Activated CD8-positive, alpha-beta T cell treated with anti-CD3 and anti-CD28 coated beads for 36 hours (primary cell): ENCODE measurements at regions of chr17 and their contacts with region 1.

Region 1: GRCh38 chr17:77088455-77089123 is 52.2 kb upstream of the SEC14L1 start:
- DNase-seq: peak; percentile 93
- ATAC-seq: peak; percentile 88
- H3K4me3 Mint-ChIP-seq: peak overlapping the region; percentile 90
- H3K27ac Mint-ChIP-seq: peak overlapping the region; percentile 92
- H3K4me1 Mint-ChIP-seq: peaks cover 49% of the 10 kb centered on the region
- H3K27me3 Mint-ChIP-seq: no peaks in the 10 kb centered on the region
- CTCF ChIP-seq: peak; percentile 71

Region 2: GRCh38 chr17:76997981-76998531 is 90.5 kb before region 1 on chr17:
- CTCF ChIA-PET with region 1: no interaction called
- POLR2A ChIA-PET with region 1: no interaction called
- intact Hi-C with region 1: no loop called
- DNase-seq: peak; percentile 87
- ATAC-seq: peak; percentile 94
- H3K4me3 Mint-ChIP-seq: peak overlapping the region; percentile 29
- H3K27ac Mint-ChIP-seq: peak overlapping the region; percentile 89
- H3K4me1 Mint-ChIP-seq: peaks cover 44% of the 10 kb centered on the region
- H3K27me3 Mint-ChIP-seq: no peaks in the 10 kb centered on the region
- CTCF ChIP-seq: no peak

Region 3: DNA sequence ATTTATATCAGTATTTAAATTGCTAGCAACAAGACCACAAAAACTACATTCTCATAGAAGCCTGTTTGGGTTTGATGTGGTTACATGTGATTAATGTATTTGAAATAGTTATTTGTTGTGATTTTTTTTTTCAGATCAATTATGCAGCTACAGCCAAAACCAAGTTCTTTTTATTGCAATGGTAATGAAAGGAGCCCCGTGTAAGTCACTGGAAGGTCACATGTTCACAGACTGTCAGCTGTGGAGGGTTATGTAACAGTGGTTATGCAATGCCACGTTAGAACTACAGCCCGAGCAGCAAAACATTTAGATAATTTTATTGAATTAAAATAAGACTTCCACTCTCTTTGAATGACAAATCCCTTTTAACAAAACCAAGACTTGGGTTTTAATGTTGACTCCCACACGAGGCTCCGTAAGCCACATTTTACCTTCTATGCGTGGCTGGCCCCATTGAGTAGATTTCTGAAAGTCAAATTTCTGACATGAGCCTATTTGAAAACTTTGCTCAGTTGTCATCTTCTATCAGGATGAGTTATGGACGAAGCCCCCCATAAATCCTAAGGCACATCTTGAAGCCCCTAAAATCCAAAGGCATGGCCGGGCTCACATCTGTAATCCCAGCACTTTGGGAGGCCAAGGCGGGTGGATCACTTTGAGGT is 10.4 kb after region 1 on chr17:
- CTCF ChIA-PET with region 1: interaction called, 5 read pairs
- POLR2A ChIA-PET with region 1: interaction called, 10 read pairs
- intact Hi-C with region 1: no loop called
- DNase-seq: peak; percentile 15
- ATAC-seq: peak; percentile 28
- H3K4me3 Mint-ChIP-seq: no peak overlapping the region
- H3K27ac Mint-ChIP-seq: peak overlapping the region; percentile 86
- H3K4me1 Mint-ChIP-seq: peaks cover 41% of the 10 kb centered on the region
- H3K27me3 Mint-ChIP-seq: no peaks in the 10 kb centered on the region
- CTCF ChIP-seq: no peak

Region 4: GRCh38 chr17:77127735-77128361 is 39.3 kb after region 1 on chr17:
- CTCF ChIA-PET with region 1: interaction called, 10 read pairs
- POLR2A ChIA-PET with region 1: interaction called, 9 read pairs
- intact Hi-C with region 1: no loop called
- DNase-seq: peak; percentile 91
- ATAC-seq: peak; percentile 94
- H3K4me3 Mint-ChIP-seq: peak overlapping the region; percentile 64
- H3K27ac Mint-ChIP-seq: peak overlapping the region; percentile 92
- H3K4me1 Mint-ChIP-seq: peaks cover 41% of the 10 kb centered on the region
- H3K27me3 Mint-ChIP-seq: no peaks in the 10 kb centered on the region
- CTCF ChIP-seq: no peak

Region 5: DNA sequence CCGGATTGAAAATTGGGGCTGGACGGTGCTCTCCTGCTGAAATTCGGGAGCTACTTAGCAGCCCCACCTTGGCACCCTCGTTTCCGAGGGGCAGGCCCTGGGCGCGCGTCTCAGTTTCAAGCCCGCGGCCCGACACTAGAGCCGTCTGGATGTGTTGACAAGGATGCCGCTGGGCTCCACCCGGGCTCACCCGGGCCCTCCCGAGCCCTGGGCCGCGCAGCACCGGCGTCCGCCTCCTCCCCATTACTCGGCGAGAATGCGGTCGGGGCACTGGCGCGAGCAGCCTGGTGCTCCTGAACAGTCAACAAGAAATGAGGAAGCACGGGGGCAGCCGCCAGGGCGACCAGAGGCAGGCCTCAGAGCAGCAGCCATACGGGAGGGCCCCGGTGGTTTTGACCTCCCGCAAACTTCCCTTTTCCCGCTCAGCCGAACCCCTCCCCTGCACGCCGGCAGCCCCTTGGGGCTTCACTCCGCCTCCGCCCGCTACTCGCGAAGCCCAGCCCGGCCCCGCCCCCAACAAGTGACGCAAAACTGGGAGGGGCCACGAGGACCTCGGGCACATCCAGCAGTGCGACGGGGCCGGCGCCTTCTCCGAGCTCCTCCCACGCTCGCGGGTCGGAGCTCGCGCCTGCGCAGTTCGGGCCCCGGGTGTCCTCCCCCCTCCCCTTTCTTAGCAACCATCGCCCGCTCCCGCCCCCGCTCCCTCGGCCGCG is 51.7 kb after region 1 on chr17:
- CTCF ChIA-PET with region 1: interaction called, 13 read pairs
- POLR2A ChIA-PET with region 1: interaction called, 15 read pairs
- intact Hi-C with region 1: no loop called
- DNase-seq: peak; percentile 99
- ATAC-seq: peak; percentile 87
- H3K4me3 Mint-ChIP-seq: peak overlapping the region; percentile 72
- H3K27ac Mint-ChIP-seq: peak overlapping the region; percentile 97
- H3K4me1 Mint-ChIP-seq: peaks cover 48% of the 10 kb centered on the region
- H3K27me3 Mint-ChIP-seq: no peaks in the 10 kb centered on the region
- CTCF ChIP-seq: no peak

Region 6: GRCh38 chr17:77247048-77247541 is 158.5 kb after region 1 on chr17:
- CTCF ChIA-PET with region 1: interaction called, 29 read pairs
- POLR2A ChIA-PET with region 1: interaction called, 7 read pairs
- intact Hi-C with region 1: loop called (anchors 1 kb)
- DNase-seq: peak; percentile 91
- ATAC-seq: peak; percentile 96
- H3K4me3 Mint-ChIP-seq: peak overlapping the region; percentile 48
- H3K27ac Mint-ChIP-seq: no peak overlapping the region
- H3K4me1 Mint-ChIP-seq: peaks cover 9% of the 10 kb centered on the region
- H3K27me3 Mint-ChIP-seq: peaks cover 11% of the 10 kb centered on the region
- CTCF ChIP-seq: peak; percentile 99